ENCODE measurements at regions of chr6 and their contacts with region 1.

Region 1: DNA sequence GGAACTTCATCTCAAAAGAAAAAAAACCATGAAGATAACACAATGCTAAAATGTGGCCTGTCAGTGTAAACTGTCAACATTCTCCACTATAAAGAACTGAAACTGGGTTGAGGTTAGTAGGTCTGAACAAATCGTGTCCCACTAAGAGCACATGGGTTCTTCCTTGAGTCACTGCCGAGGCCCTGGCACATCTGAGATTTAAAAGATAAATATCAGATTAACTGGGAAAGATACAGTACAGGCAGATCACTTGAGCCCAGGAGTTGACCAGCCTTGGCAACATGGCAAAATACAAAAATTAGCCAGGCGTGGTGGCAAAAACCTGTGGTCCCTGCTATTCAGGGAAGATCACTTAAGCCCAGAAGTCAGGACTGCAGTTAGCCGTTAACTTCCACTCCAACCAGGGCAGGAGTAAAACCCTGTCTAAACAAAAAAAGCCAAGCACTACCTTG is 5.6 kb downstream of the EEF1A1 start:
- DNase-seq: peak in 1 of 5 donors; percentile 38
- H3K4me3 ChIP-seq: no peak overlapping the region
- H3K4me3 Mint-ChIP-seq: peak overlapping the region in 5 of 8 donors; percentile 18 to 83 (median 29)
- H3K27ac ChIP-seq: peak overlapping the region; percentile 31
- H3K27ac Mint-ChIP-seq: peak overlapping the region; percentile 70 to 99 (median 90)
- H3K4me1 ChIP-seq: peaks cover 55% of the 10 kb centered on the region
- H3K4me1 Mint-ChIP-seq: peaks cover 36 to 62% (median 47%) of the 10 kb centered on the region in 4 donors
- H3K27me3 ChIP-seq: no peaks in the 10 kb centered on the region
- H3K27me3 Mint-ChIP-seq: no peaks in the 10 kb centered on the region

Region 2: DNA sequence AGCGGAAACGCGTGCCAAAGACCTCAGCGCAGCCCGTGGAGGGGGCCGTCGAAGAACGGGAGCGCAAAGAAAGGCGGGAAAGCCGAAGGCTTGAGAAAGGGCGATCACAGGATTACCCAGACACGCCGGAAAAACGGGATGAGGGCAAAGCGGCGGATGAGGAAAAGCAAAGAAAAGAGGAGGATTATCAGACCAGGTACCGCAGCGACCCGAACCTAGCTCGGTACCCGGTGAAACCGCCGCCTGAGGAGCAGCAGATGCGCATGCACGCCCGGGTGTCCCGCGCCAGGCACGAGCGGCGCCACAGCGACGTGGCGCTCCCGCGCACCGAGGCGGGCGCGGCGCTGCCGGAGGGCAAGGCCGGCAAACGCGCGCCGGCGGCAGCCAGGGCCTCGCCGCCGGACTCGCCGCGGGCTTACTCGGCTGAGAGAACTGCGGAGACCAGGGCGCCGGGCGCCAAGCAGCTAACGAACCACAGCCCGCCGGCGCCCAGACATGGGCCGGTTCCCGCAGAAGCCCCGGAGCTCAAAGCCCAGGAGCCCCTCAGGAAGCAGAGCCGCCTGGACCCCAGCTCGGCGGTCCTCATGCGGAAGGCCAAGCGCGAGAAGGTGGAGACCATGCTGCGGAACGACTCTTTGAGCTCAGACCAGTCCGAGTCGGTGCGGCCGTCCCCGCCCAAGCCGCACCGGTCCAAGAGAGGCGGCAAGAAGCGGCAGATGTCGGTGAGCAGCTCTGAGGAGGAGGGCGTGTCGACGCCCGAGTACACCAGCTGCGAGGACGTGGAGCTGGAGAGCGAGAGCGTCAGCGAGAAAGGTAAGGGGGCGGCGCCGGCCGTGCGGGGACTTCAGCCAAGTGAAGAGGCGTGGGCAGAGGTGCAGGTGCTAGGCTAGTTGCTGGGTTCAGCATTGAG is 1332.6 kb before region 1 on chr6:
- CTCF ChIA-PET with region 1: no interaction called
- POLR2A ChIA-PET with region 1: no interaction called
- intact Hi-C with region 1: no loop called
- DNase-seq: no peak
- H3K4me3 ChIP-seq: no peak overlapping the region
- H3K4me3 Mint-ChIP-seq: peak overlapping the region in 4 of 8 donors; percentile 23 to 68 (median 38)
- H3K27ac ChIP-seq: no peak overlapping the region
- H3K27ac Mint-ChIP-seq: no peak overlapping the region
- H3K4me1 ChIP-seq: no peaks in the 10 kb centered on the region
- H3K4me1 Mint-ChIP-seq: peaks cover 3 to 9% (median 4%) of the 10 kb centered on the region in 4 donors
- H3K27me3 ChIP-seq: no peaks in the 10 kb centered on the region
- H3K27me3 Mint-ChIP-seq: peaks cover 17 to 18% of the 10 kb centered on the region in 2 donors

Region 3: DNA sequence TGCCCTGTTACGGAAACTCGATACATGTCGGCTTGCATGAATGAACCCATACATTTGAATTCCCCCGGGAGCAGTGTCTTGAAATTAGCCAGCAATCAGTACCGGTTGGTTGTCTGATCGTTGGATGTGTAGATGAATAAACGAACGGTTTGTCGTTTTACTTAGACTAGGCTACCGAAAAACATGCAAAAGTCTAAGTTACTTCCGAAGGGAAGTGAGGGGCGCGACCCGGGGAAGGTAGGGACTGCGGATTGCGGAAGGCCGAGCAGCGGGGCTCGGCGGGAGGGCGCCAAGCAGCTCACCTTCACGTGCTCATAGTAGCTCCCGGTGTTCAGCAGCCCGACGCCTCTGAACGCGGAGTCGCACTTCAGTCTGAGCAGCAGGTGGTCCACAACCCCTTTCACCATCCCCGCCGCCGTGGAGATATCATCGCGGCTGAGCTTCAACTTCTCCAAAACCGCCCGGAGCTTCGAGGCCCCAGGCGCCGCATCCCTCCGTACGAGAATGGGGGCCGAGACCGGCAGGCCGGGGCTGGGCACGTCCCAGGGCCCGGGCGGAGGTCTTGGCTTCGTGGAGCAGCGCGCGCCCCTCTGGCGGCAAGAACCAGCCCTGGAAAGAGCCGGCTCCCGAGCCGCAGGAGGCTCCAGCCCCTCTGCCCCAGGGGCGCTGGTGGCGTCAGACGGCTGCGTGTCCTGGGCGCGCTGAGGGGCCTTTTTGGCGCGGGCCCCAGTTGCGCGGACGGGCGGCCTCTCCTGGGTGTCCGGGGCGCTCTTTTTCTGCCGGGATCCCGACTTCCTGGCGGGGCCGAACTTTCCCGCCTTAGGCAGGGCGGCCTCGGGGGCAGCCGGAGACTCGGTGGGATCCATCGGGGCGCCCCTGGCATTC is 63.8 kb before region 1 on chr6:
- CTCF ChIA-PET with region 1: interaction called, 8 read pairs
- POLR2A ChIA-PET with region 1: interaction called, 58 read pairs
- intact Hi-C with region 1: loop called (anchors 2 kb)
- DNase-seq: peak; percentile 41 to 64 (median 49)
- H3K4me3 ChIP-seq: peak overlapping the region; percentile 97 to 98
- H3K4me3 Mint-ChIP-seq: peak overlapping the region; percentile 90 to 99 (median 97)
- H3K27ac ChIP-seq: peak overlapping the region; percentile 92
- H3K27ac Mint-ChIP-seq: peak overlapping the region; percentile 88 to 97 (median 92)
- H3K4me1 ChIP-seq: peaks cover 32% of the 10 kb centered on the region
- H3K4me1 Mint-ChIP-seq: peaks cover 14 to 44% (median 24%) of the 10 kb centered on the region in 4 donors
- H3K27me3 ChIP-seq: no peaks in the 10 kb centered on the region
- H3K27me3 Mint-ChIP-seq: no peaks in the 10 kb centered on the region

Region 4: DNA sequence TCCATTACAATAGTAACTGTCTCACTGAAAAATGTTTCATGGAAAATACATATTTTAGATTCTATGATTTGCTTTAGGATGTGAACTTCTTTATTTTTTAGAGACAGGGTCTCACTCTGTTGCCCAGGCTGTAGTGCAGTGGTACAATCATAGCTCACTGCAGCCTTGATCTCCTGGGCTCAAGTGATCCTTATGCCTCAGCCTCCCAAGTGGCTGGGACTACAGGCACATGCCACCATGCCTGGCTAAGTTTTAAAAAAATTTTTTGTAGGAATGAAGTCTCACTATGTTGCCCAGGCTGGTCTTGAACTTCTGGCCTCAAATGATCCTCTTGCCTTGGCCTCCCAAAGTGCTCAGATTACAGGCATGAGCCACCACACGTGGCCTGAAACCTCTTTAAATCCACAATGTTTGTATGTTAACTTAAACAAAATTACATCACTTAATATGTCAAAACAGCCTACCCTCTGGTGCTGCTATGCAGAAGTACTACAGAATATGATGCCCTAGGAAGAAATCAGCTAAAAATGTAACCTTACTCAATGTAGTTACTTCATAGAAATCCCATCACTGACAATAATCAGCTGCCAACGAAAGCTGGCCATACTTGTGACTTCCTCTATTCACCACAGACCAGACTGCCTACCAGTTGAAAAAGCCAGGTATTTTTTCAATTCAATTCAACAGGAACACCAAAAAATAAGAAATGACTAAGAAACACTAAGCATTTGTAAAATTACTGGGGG is 12.0 kb before region 1 on chr6:
- CTCF ChIA-PET with region 1: interaction called, 10 read pairs
- POLR2A ChIA-PET with region 1: interaction called, 12 read pairs
- intact Hi-C with region 1: no loop called
- DNase-seq: no peak
- H3K4me3 ChIP-seq: no peak overlapping the region
- H3K4me3 Mint-ChIP-seq: no peak overlapping the region
- H3K27ac ChIP-seq: no peak overlapping the region
- H3K27ac Mint-ChIP-seq: peak overlapping the region in 2 of 7 donors; percentile 52 to 88
- H3K4me1 ChIP-seq: no peaks in the 10 kb centered on the region
- H3K4me1 Mint-ChIP-seq: no peaks in the 10 kb centered on the region
- H3K27me3 ChIP-seq: no peaks in the 10 kb centered on the region
- H3K27me3 Mint-ChIP-seq: no peaks in the 10 kb centered on the region

Region 5: DNA sequence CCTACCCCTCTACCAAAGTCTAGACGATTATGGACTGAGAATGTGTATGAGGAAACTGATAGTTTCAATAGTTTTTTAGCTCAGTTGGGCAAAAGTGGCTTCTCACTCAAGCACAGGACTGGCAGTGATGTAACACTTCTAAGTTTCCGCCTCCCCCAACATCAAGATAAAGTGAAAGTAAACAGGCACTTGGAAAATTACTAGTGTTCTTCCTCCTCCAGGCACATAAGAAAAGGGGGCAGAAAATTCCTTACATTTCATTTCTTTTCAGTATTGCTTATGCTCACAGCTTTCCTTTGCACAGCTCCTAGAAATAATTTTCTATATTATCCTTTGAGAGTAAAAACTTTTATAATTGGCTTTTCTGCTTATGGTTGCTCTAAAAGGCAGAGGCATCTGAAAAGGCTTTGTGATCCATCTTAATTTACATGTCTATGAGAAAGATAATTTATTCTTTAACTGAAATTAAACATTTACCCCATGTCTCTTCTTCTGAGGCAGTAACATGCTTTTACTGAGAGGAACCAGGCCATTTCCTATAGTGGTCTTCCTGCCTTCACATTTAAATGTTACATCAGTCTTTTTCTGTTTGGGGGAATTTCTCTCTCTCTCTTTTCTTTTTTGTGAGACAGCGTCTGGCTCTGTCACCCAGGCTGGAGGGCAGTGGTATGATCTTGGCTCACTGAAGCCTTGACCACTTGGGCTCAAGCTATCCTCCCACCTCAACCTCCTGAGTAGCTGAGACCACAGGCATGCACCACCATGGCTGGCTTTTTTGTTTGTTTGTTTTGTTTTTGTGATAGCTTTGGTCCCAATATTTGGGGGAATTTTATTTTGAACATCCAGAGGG is 70.6 kb after region 1 on chr6:
- CTCF ChIA-PET with region 1: interaction called, 27 read pairs
- POLR2A ChIA-PET with region 1: interaction called, 233 read pairs
- intact Hi-C with region 1: no loop called
- DNase-seq: peak; percentile 57 to 69 (median 63)
- H3K4me3 ChIP-seq: peak overlapping the region; percentile 54 to 56
- H3K4me3 Mint-ChIP-seq: peak overlapping the region; percentile 78 to 88 (median 84)
- H3K27ac ChIP-seq: peak overlapping the region; percentile 70
- H3K27ac Mint-ChIP-seq: peak overlapping the region; percentile 93 to 99 (median 98)
- H3K4me1 ChIP-seq: peaks cover 26% of the 10 kb centered on the region
- H3K4me1 Mint-ChIP-seq: peaks cover 15 to 34% (median 19%) of the 10 kb centered on the region in 4 donors
- H3K27me3 ChIP-seq: no peaks in the 10 kb centered on the region
- H3K27me3 Mint-ChIP-seq: no peaks in the 10 kb centered on the region

Region 6: GRCh38 chr6:73610444-73611275 is 95.4 kb after region 1 on chr6:
- CTCF ChIA-PET with region 1: interaction called, 222 read pairs
- POLR2A ChIA-PET with region 1: interaction called, 316 read pairs
- intact Hi-C with region 1: loop called (anchors 1 kb)
- DNase-seq: peak in 4 of 5 donors; percentile 49 to 62 (median 59)
- H3K4me3 ChIP-seq: no peak overlapping the region
- H3K4me3 Mint-ChIP-seq: no peak overlapping the region
- H3K27ac ChIP-seq: no peak overlapping the region
- H3K27ac Mint-ChIP-seq: peak overlapping the region in 5 of 7 donors; percentile 1 to 14 (median 4)
- H3K4me1 ChIP-seq: no peaks in the 10 kb centered on the region
- H3K4me1 Mint-ChIP-seq: peaks cover 0 to 6% (median 4%) of the 10 kb centered on the region in 4 donors
- H3K27me3 ChIP-seq: no peaks in the 10 kb centered on the region
- H3K27me3 Mint-ChIP-seq: no peaks in the 10 kb centered on the region

Region 7: GRCh38 chr6:73732845-73733675 is 217.8 kb after region 1 on chr6:
- CTCF ChIA-PET with region 1: interaction called, 3 read pairs
- POLR2A ChIA-PET with region 1: no interaction called
- intact Hi-C with region 1: loop called (anchors 1 kb)
- DNase-seq: peak; percentile 48 to 63 (median 57)
- H3K4me3 ChIP-seq: no peak overlapping the region
- H3K4me3 Mint-ChIP-seq: no peak overlapping the region
- H3K27ac ChIP-seq: no peak overlapping the region
- H3K27ac Mint-ChIP-seq: peak overlapping the region in 1 of 7 donors; percentile 4
- H3K4me1 ChIP-seq: no peaks in the 10 kb centered on the region
- H3K4me1 Mint-ChIP-seq: no peaks in the 10 kb centered on the region
- H3K27me3 ChIP-seq: no peaks in the 10 kb centered on the region
- H3K27me3 Mint-ChIP-seq: peaks cover 3% of the 10 kb centered on the region in 2 donors